Activated T-helper 1 cell treated with anti-CD3 and anti-CD28 coated beads, Interleukin-12 subunit alpha, Interleukin-12 subunit beta, Interleukin-2, Interleukin-4 antibody, amounts not matched to agents 30 ng/mL and 10 ng/mL and 1 ng/mL, durations not matched to agents 14 hours and 24 hours and 36 hours (primary cell): ENCODE measurements at regions of chr14 and their contacts with region 1.

Region 1: DNA sequence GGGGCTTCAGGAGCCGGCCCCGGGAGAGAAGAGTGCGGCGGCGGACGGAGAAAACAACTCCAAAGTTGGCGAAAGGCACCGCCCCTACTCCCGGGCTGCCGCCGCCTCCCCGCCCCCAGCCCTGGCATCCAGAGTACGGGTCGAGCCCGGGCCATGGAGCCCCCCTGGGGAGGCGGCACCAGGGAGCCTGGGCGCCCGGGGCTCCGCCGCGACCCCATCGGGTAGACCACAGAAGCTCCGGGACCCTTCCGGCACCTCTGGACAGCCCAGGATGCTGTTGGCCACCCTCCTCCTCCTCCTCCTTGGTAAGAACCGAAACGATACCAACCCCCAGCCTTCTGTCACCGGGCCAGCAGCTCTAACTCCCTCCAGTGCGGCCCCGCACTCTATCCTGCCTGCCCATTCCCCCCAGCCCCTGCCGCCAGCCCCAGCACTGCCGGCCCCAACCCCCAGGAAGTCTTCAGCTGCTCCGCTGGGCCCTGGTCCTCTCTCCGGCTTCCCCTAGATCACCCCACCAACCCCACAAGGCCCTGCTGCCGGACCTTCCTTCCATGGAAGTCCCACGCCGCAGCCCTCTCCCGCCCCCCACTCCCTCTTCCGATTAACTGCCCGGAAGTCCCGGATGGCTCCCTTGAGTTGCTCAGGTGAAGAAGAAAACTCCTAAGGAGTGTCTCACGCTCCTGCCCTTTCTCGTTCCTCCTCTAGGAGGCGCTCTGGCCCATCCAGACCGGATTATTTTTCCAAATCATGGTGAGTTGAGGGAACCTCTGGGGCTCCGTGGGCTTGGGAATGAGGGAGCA is 693 bp downstream of the LRP10 start:
- DNase-seq: peak; percentile 63
- H3K4me3 Mint-ChIP-seq: peak overlapping the region; percentile 91
- H3K27ac Mint-ChIP-seq: peak overlapping the region; percentile 80
- H3K4me1 Mint-ChIP-seq: peaks cover 22% of the 10 kb centered on the region
- H3K27me3 Mint-ChIP-seq: no peaks in the 10 kb centered on the region

Region 2: DNA sequence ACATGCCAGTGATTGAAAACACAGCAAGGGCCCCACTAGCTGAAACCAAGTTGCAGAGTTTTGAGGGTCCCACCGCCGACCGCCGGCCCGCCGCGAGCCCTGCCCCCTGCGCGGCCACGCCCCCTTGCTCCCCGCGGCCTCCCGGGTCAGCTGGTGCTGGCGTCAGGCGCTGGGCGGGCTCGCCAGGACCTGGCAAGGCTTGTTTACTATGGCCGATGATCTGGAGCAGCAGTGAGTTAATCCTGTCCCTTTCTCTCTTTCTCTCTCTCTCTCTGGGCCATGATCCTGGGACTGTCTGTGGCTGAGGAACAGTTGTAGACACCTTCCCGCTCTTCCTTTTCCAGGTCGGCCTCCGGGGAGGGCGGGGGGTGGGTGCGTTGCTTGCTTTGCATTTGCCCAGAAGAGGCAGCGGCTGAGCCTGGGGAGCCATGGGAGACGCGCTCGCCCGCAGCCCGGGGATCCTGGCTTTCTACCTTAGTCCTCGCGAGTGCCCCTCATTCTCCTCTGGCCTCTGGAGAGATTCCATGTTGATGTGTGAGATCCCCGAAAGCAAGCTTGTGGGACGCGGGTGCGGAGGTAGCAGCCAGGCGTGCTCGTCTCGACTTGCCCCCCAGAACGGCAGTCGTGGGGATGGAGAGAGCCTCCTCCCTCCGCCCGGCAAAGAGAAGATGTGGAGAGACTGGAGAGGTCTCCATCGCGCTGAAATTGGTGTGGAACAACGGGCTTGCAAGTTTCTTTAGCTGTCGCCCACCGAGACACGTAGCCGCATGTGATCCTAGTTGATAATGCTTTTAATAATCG is 273.9 kb before region 1 on chr14 and contains the start of gene ABHD4:
- intact Hi-C with region 1: loop called (anchors 1 kb)
- DNase-seq: peak; percentile 72
- H3K4me3 Mint-ChIP-seq: peak within 1 kb of the TSS; percentile 97
- H3K27ac Mint-ChIP-seq: peak within 1 kb of the TSS; percentile 84
- H3K4me1 Mint-ChIP-seq: peaks cover 39% of the 10 kb centered on the region
- H3K27me3 Mint-ChIP-seq: no peaks in the 10 kb centered on the region
- total RNA-seq, gene ABHD4: 13.2 and 13.6 TPM in 2 replicates

Region 3: GRCh38 chr14:22829661-22830442 is 42.4 kb before region 1 on chr14 and contains the start of gene MRPL52:
- intact Hi-C with region 1: loop called (anchors 2 kb)
- DNase-seq: peak; percentile 81
- H3K4me3 Mint-ChIP-seq: peak within 1 kb of the TSS; percentile 95
- H3K27ac Mint-ChIP-seq: peak within 1 kb of the TSS; percentile 91
- H3K4me1 Mint-ChIP-seq: peaks cover 33% of the 10 kb centered on the region
- H3K27me3 Mint-ChIP-seq: no peaks in the 10 kb centered on the region
- total RNA-seq, gene MRPL52: 187 and 196 TPM in 2 replicates

Region 4: GRCh38 chr14:22900081-22900799 is 28.0 kb after region 1 on chr14:
- intact Hi-C with region 1: loop called (anchors 1 kb)
- DNase-seq: peak; percentile 30
- H3K4me3 Mint-ChIP-seq: no peak overlapping the region
- H3K27ac Mint-ChIP-seq: peak overlapping the region; percentile 57
- H3K4me1 Mint-ChIP-seq: peaks cover 19% of the 10 kb centered on the region
- H3K27me3 Mint-ChIP-seq: no peaks in the 10 kb centered on the region

Region 5: GRCh38 chr14:22966783-22967269 is 94.6 kb after region 1 on chr14:
- intact Hi-C with region 1: no loop called
- DNase-seq: no peak
- H3K4me3 Mint-ChIP-seq: no peak overlapping the region
- H3K27ac Mint-ChIP-seq: no peak overlapping the region
- H3K4me1 Mint-ChIP-seq: no peaks in the 10 kb centered on the region
- H3K27me3 Mint-ChIP-seq: peaks cover 11% of the 10 kb centered on the region

Region 6: DNA sequence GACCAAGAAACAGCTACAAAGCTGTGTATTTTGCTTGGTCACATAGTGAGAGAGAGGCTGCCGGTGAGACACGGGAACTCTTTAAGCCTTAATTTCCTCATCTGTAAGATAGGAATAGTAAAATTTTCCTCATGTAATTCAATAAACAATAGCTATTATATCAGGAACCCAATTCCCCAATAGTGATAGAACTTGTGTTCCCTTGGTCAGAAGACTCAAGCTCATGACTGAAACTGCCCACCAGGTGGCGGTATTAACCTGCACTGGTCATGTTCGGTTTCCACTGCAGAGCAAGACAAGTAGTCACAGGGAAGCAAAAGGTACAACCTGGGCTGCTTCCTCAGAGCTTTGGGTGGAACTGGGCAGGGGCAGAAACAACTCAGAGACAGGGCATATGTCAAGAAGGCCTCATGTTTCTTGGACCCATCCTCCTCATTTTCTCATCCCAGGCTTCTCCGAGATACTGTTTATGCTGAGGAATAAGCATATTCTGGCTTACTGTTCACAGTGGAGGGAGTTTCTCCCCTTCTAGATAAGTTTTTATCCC is 114.3 kb after region 1 on chr14:
- intact Hi-C with region 1: loop called (anchors 1 kb)
- DNase-seq: peak; percentile 79
- H3K4me3 Mint-ChIP-seq: no peak overlapping the region
- H3K27ac Mint-ChIP-seq: no peak overlapping the region
- H3K4me1 Mint-ChIP-seq: no peaks in the 10 kb centered on the region
- H3K27me3 Mint-ChIP-seq: peaks cover 3% of the 10 kb centered on the region